ENCODE measurements at regions of chr4 and their contacts with region 1.

Region 1: DNA sequence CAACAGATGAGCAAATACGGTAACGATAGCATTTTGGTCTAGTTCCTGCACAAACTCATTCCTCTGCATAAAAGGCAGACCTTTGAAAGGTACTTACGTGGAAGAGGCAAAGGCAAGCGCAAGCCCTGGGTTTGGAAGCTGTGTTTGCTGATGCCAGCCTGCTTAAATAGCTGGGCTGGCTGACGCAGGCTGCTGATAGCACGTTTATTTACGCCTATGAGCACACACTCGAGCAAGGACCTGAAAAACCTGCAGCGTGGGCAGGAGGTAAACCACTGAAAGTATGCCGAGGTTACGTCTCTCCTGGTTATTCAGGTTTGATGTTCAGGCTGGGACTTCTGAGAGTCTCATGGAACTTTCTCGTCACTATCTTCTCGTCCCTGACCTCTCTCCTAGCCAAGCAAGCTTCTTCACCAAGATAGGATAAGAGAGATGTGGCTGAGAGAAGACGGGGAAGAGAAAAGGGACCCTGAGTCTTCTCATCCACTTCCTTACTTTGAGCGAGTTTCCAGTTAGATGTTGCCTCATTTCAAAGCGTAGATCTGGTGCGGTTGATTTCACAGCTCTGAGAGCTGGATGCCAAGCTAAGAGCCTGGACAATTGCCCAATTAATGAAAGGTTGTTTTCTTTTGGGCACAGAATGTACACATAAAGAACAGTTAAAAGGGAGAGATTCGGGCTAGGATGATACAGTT is at the start of gene HOPX:
- DNase-seq: peak; percentile 90
- ATAC-seq: peak; percentile 84
- H3K4me3 Mint-ChIP-seq: peak within 1 kb of the TSS; percentile 51
- H3K27ac Mint-ChIP-seq: peak within 1 kb of the TSS; percentile 61
- H3K4me1 Mint-ChIP-seq: peaks cover 34% of the 10 kb centered on the region
- H3K27me3 Mint-ChIP-seq: peaks cover 28% of the 10 kb centered on the region
- total RNA-seq, gene HOPX: 56.3 to 83.9 TPM

Region 2: DNA sequence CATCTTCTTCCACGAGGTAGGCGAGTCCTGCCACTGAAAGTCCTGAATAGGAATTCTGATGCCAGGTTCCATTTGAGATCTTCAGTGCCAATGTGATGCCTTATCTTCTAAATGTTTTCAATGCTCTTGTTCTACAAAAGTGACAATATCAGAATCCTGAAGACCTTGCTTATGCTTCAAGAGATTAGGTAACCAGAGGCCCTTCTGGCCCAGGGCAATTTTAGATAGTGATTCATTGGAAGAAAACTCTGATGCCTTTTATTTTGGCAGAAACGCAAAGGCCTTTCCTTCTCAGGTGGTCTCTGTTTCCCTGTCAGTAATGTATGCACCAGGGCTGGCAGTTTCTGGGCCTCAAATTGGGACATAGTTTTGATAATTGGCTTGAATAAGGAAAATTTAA is 587.7 kb before region 1 on chr4:
- CTCF ChIA-PET with region 1: no interaction called
- POLR2A ChIA-PET with region 1: no interaction called
- intact Hi-C with region 1: no loop called
- DNase-seq: no peak
- ATAC-seq: no peak
- H3K4me3 Mint-ChIP-seq: no peak overlapping the region
- H3K27ac Mint-ChIP-seq: no peak overlapping the region
- H3K4me1 Mint-ChIP-seq: no peaks in the 10 kb centered on the region
- H3K27me3 Mint-ChIP-seq: peaks cover 3% of the 10 kb centered on the region

Region 3: DNA sequence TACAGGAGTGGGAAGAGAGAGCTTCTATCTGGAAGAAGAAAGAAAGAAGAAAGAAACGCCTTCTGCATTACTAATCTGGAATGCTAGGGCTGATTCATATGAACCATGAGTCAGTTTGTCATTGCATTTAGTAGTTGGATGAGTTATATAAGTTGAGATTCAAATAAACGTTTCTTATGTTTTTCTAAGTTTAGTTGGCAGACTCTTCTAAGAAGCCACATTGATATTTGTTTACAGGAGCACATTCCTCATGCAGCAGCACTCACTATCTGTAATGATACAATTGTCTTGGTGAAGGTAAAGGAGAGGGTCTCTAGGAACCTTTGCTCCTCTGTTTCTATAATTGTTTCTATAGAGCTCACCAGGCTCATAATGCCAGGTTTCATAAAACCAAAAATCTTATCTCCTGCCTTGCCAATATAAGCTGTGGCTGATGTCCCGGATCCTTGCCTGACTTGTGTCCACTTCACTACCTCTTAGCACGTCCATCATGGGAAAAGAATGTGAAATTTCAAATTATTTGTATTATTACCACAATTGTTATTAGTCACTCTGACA is 39.7 kb before region 1 on chr4:
- CTCF ChIA-PET with region 1: interaction called, 5 read pairs
- POLR2A ChIA-PET with region 1: no interaction called
- intact Hi-C with region 1: loop called (anchors 1 kb)
- DNase-seq: no peak
- ATAC-seq: peak; percentile 80
- H3K4me3 Mint-ChIP-seq: no peak overlapping the region
- H3K27ac Mint-ChIP-seq: peak overlapping the region; percentile 82
- H3K4me1 Mint-ChIP-seq: peaks cover 36% of the 10 kb centered on the region
- H3K27me3 Mint-ChIP-seq: no peaks in the 10 kb centered on the region

Region 4: GRCh38 chr4:56655209-56655626 is 26.1 kb before region 1 on chr4:
- CTCF ChIA-PET with region 1: interaction called, 7 read pairs
- POLR2A ChIA-PET with region 1: interaction called, 3 read pairs
- intact Hi-C with region 1: loop called in 1 of 2 experiments (anchors 2 kb)
- DNase-seq: peak; percentile 43
- ATAC-seq: no peak
- H3K4me3 Mint-ChIP-seq: peak overlapping the region; percentile 86
- H3K27ac Mint-ChIP-seq: peak overlapping the region; percentile 66
- H3K4me1 Mint-ChIP-seq: peaks cover 61% of the 10 kb centered on the region
- H3K27me3 Mint-ChIP-seq: peaks cover 18% of the 10 kb centered on the region

Region 5: GRCh38 chr4:56723201-56723605 is 41.9 kb after region 1 on chr4:
- CTCF ChIA-PET with region 1: no interaction called
- POLR2A ChIA-PET with region 1: no interaction called
- intact Hi-C with region 1: loop called (anchors 1 kb)
- DNase-seq: peak; percentile 80
- ATAC-seq: peak; percentile 97
- H3K4me3 Mint-ChIP-seq: peak overlapping the region; percentile 4
- H3K27ac Mint-ChIP-seq: peak overlapping the region; percentile 87
- H3K4me1 Mint-ChIP-seq: peaks cover 23% of the 10 kb centered on the region
- H3K27me3 Mint-ChIP-seq: no peaks in the 10 kb centered on the region

Region 6: GRCh38 chr4:56821381-56822243 is 140.3 kb after region 1 on chr4 and contains the start of gene SPINK2:
- CTCF ChIA-PET with region 1: no interaction called
- POLR2A ChIA-PET with region 1: no interaction called
- intact Hi-C with region 1: loop called in 1 of 2 experiments (anchors 5 kb)
- DNase-seq: peak; percentile 83
- ATAC-seq: peak; percentile 79
- H3K4me3 Mint-ChIP-seq: peak within 1 kb of the TSS; percentile 69
- H3K27ac Mint-ChIP-seq: no peak within 1 kb of the TSS
- H3K4me1 Mint-ChIP-seq: peaks cover 34% of the 10 kb centered on the region
- H3K27me3 Mint-ChIP-seq: peaks cover 11% of the 10 kb centered on the region
- total RNA-seq, gene SPINK2: 1.3 to 1.9 TPM